ENCODE measurements at regions of chr16 and their contacts with region 1.

Region 1: DNA sequence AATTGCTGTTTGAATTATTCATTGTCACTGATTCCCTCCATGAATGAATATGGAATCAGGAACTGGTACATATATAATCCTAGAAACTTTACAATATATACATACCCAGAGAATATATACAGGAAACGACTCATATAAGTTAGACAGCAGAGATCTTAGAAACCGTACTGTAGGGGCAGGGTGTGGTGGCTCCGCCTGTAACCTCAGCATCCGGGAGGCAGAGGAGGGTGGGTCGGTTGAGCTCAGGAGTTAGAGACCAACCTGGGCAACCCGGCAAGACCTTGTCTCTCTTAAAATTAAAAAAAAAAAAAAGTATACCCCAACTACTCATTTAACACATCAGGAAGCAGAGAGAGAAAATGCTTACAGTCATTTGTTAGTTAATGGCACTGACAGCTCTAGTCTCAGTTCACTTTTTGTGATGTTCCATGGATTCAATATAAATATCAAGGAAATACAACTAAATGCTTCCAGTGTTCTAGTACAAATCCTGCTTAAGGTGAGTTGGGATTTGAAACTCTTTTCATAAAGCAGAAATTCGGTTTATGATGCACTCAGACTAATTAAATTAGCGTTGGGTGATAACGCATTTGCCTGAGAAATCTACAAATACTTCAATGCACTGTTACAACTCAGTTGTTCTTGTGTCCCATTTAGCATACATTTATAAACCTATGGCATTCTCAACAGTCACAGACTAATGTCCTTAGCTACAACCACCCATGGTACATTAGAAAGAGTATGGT is 5.6 kb downstream of the GLG1 start:
- DNase-seq: no peak
- ATAC-seq: peak; percentile 61
- H3K4me3 ChIP-seq: peak overlapping the region; percentile 1 to 6; a peak in 3 of 4 replicates
- H3K27ac ChIP-seq: peak overlapping the region; percentile 17; the same call in 1 of the 2 replicates
- H3K4me1 ChIP-seq: peaks cover 59 to 66% of the 10 kb centered on the region in 2 experiments
- H3K27me3 ChIP-seq: no peaks in the 10 kb centered on the region
- CTCF ChIP-seq: no peak
- POLR2A ChIP-seq: no peak
- RAD21 ChIP-seq: no peak

Region 2: GRCh38 chr16:74563828-74564263 is 37.5 kb before region 1 on chr16:
- CTCF ChIA-PET with region 1: no interaction called
- POLR2A ChIA-PET with region 1: interaction called, 4 read pairs
- RAD21 ChIA-PET with region 1: no interaction called
- intact Hi-C with region 1: loop called (anchors 5 kb)
- DNase-seq: peak; percentile 59
- ATAC-seq: peak; percentile 90
- H3K4me3 ChIP-seq: 0 out of 4 replicates have a peak overlapping the region, but pooled peaks of 1 of the 2 experiments have one; percentile 3
- H3K27ac ChIP-seq: peak overlapping the region; percentile 44
- H3K4me1 ChIP-seq: peaks cover 64 to 72% of the 10 kb centered on the region in 2 experiments
- H3K27me3 ChIP-seq: no peaks in the 10 kb centered on the region
- CTCF ChIP-seq: no peak
- POLR2A ChIP-seq: no peak
- RAD21 ChIP-seq: no peak; the same call in 1 of the 2 replicates

Region 3: GRCh38 chr16:74627506-74628220 is 26.4 kb after region 1 on chr16:
- CTCF ChIA-PET with region 1: no interaction called
- POLR2A ChIA-PET with region 1: no interaction called
- RAD21 ChIA-PET with region 1: no interaction called
- intact Hi-C with region 1: no loop called
- DNase-seq: no peak
- ATAC-seq: no peak
- H3K4me3 ChIP-seq: no peak overlapping the region
- H3K27ac ChIP-seq: no peak overlapping the region
- H3K4me1 ChIP-seq: no peaks in the 10 kb centered on the region
- H3K27me3 ChIP-seq: no peaks in the 10 kb centered on the region
- CTCF ChIP-seq: no peak
- POLR2A ChIP-seq: no peak
- RAD21 ChIP-seq: no peak

Measured in HCT116 (cell line).